Activated CD8-positive, alpha-beta T cell treated with anti-CD3 and anti-CD28 coated beads, Interleukin-2, amount 10 ng/mL, durations not matched to agents 7 days and 5 days (primary cell): ENCODE measurements at regions of chr1 and their contacts with region 1.

Region 1: DNA sequence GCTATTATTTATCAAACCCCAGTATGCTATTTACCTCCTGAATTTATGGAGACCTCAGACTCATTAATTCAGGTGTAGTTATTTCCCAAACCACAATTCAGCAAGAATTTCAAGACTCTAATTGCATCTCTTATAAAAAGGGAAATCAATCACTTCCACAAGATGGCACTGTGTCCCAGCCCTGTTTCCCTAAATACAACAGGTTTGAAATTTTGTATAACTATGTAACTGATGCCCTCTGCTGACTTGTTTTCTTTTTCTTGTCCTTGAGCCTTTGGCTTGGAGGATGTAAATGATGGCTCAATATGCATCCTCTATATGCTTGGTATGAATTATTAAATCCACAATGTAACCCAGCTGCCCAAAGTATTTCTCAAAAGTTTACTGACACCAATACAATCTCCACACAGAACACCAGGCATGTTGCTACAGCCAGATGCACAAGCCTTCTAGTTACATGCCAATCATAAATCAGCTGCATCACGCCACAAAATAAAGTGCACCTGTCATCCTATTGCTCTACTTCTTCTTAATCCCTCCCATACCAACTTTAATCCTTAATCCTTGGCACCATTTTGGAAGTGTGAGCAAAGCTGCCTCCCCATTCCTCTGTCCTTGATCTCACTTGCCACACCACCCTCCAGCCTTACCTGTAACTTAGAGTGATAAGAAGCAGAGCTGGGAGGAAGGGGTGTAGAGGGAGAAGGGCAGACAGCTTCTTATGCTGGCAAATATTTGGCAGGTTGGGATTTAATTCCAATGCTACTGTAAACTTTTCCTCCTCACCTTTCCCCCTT is 9.0 kb downstream of the C1orf105 start:
- DNase-seq: peak; percentile 71
- ATAC-seq: peak; percentile 70
- H3K4me3 Mint-ChIP-seq: no peak overlapping the region
- H3K27ac Mint-ChIP-seq: no peak overlapping the region
- H3K4me1 Mint-ChIP-seq: peaks cover 35% of the 10 kb centered on the region
- H3K27me3 Mint-ChIP-seq: no peaks in the 10 kb centered on the region

Region 2: DNA sequence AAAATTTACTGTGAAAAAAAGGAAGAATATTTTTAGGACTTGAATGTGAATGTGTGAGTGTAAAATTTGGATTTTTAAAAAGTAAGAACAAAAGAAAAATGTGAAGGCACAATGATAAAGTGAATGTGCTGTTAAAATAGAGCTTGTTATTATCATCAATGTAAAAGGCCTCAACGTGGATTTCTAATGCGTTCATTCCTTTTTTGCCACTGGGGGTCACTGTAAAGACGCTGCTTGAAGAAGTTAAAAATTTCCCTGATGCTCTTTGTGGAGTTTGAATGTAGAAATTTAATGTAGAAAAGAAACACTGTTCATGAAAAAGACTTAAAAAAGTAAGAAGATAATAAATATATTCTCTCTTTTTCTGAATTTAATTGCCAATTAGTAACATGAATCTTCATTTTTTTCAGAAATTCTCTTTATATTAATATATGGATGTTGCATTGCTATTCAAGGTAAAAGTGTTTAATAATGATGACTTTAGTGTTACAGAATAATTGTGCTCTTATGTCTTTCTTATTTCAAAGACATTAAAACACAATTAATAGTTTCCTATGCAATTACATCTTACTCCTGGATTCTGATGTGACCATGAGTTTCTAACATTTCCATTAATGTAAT is 426.7 kb before region 1 on chr1:
- CTCF ChIA-PET with region 1: interaction called, 37 read pairs
- POLR2A ChIA-PET with region 1: no interaction called
- DNase-seq: peak; percentile 49
- ATAC-seq: no peak
- H3K4me3 Mint-ChIP-seq: no peak overlapping the region
- H3K27ac Mint-ChIP-seq: no peak overlapping the region
- H3K4me1 Mint-ChIP-seq: peaks cover 1% of the 10 kb centered on the region
- H3K27me3 Mint-ChIP-seq: no peaks in the 10 kb centered on the region

Region 3: DNA sequence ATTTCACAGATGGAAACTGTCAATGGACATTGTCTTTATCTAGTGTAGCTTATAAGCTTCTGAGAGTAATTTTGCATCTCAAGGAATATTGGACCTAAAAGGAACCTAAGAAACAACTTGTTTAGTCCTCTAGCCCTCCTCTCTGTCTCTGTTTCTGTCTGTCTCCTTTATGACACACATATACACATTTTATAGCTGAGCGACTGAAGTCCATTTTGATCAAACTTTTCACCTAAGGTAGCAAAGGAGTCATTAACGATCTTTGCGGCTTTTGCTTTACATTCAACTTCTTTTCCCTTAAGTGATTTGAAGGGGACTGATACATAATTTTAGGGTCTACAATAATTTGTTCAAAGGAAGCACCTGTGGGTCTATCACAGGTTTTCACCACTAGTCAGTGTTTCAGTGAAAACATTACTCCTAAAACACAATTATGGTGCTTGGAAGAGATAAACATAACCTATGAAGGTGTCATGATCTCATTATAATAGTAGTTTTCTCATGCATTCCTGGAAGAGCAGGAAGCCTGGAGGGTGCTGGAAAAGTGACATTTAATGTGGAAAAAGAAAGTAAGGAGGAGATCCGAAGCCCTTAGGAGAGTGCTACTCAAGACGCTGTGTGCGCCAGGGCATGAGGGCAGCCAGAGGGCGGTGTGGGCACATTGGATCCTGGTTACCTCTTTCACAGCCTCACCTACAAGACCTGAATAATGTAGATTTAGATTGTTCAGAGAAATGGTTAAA is 339.6 kb before region 1 on chr1:
- CTCF ChIA-PET with region 1: interaction called, 13 read pairs
- POLR2A ChIA-PET with region 1: no interaction called
- DNase-seq: peak; percentile 71
- ATAC-seq: peak; percentile 78
- H3K4me3 Mint-ChIP-seq: no peak overlapping the region
- H3K27ac Mint-ChIP-seq: no peak overlapping the region
- H3K4me1 Mint-ChIP-seq: peaks cover 6% of the 10 kb centered on the region
- H3K27me3 Mint-ChIP-seq: peaks cover 3% of the 10 kb centered on the region

Region 4: GRCh38 chr1:172254521-172255222 is 174.9 kb before region 1 on chr1:
- CTCF ChIA-PET with region 1: no interaction called
- POLR2A ChIA-PET with region 1: no interaction called
- DNase-seq: no peak
- ATAC-seq: peak; percentile 57
- H3K4me3 Mint-ChIP-seq: peak overlapping the region; percentile 0
- H3K27ac Mint-ChIP-seq: peak overlapping the region; percentile 35
- H3K4me1 Mint-ChIP-seq: peaks cover 19% of the 10 kb centered on the region
- H3K27me3 Mint-ChIP-seq: no peaks in the 10 kb centered on the region

Region 5: GRCh38 chr1:172417552-172417951 is 12.0 kb before region 1 on chr1:
- CTCF ChIA-PET with region 1: interaction called, 13 read pairs
- POLR2A ChIA-PET with region 1: interaction called, 3 read pairs
- DNase-seq: no peak
- ATAC-seq: no peak
- H3K4me3 Mint-ChIP-seq: no peak overlapping the region
- H3K27ac Mint-ChIP-seq: no peak overlapping the region
- H3K4me1 Mint-ChIP-seq: no peaks in the 10 kb centered on the region
- H3K27me3 Mint-ChIP-seq: no peaks in the 10 kb centered on the region

Region 6: DNA sequence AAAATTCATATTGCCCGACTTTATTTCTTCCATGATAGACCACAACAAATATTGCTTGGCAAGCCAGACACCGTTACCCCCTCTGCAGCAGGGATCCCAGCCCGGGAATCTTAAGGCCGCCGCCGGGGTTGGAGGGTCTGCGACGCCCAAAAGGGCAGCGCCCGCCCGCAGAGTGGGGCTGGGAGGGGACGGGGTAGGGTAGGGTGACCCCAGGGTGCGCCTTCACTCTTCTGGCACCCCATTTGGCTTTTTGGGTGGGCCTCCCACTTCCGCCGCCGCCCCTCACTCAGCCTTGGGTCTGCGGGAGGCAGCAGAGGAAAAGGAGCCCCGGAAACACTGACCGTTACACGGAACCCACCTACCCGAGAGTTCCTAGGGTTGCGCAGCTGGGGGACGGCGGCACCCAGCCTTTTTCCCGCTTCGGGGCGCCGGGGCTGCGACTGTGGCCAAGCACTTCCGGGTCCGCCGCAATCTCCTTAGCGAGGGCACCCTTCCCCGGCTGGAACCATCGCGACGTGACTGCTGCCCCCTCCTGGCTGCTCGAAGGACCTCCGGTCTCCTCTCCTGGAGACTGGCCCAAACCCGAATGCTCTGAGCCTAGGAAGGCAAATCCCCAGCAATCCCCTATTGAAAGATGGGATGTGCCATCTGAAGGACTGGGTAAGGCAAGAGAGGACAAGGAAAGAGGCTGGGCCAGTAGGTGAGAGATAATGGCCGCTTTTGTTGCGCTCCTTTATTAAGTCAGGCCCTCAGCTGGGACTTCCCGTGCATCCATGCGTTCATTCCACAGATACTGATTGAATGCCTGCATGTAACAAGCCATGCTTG is 14.3 kb after region 1 on chr1 and contains the start of gene PIGC:
- CTCF ChIA-PET with region 1: interaction called, 107 read pairs
- POLR2A ChIA-PET with region 1: no interaction called
- DNase-seq: peak; percentile 95
- ATAC-seq: peak; percentile 100
- H3K4me3 Mint-ChIP-seq: peak within 1 kb of the TSS; percentile 91
- H3K27ac Mint-ChIP-seq: peak within 1 kb of the TSS; percentile 91
- H3K4me1 Mint-ChIP-seq: peaks cover 32% of the 10 kb centered on the region
- H3K27me3 Mint-ChIP-seq: no peaks in the 10 kb centered on the region
- total RNA-seq, gene PIGC: 25.4 to 27.0 TPM